ENCODE measurements at regions of chr7 and their contacts with region 1.

Region 1: GRCh38 chr7:141737834-141738591 is at the start of gene SSBP1:
- DNase-seq: peak; percentile 95
- H3K4me3 Mint-ChIP-seq: peak within 1 kb of the TSS; percentile 90
- H3K27ac Mint-ChIP-seq: peak within 1 kb of the TSS; percentile 96
- H3K4me1 Mint-ChIP-seq: peaks cover 36% of the 10 kb centered on the region
- H3K27me3 Mint-ChIP-seq: no peaks in the 10 kb centered on the region
- total RNA-seq, gene SSBP1: 202 to 230 TPM

Region 2: DNA sequence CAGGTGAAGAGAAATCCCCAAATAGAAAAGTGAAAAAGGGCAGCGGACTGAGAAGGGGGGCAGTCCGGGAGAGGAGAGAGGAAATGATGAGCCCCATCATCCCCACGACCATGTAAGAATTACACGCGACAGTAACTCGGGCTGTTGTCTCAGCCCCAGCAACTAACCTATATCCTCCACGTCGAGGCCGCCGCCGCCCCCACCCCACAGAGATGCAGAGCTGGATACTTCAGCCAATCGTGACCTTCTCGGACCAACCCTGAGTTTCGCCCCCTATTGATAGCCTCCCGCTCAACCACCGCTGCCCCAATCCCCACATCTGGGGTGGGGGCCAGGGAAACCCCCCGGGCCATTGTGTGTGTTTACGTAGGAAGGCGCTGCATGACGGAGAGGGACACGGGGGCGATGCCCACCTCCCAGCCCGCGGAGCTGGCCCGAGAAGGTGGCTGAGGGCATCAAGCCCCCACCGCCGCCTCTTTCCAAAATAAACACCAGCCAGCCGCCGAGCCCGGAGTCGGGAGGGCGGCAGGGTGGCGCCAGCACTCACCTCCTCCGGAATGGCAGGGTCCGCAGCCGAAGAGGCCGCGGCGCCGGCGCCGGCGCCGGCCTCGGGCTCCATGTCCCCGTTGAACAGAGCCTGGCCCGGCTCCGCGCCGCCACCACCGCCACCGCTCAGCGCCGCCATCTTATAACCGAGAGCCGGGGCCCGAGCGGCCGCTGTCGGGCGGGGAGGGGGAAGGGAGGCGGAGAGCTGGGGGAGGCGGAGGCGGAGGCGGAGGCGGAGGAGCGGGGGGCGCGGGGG is 813.8 kb before region 1 on chr7:
- CTCF ChIA-PET with region 1: no interaction called
- intact Hi-C with region 1: loop called (anchors 1 kb)
- DNase-seq: peak; percentile 77
- H3K4me3 Mint-ChIP-seq: no peak overlapping the region
- H3K27ac Mint-ChIP-seq: no peak overlapping the region
- H3K4me1 Mint-ChIP-seq: peaks cover 10% of the 10 kb centered on the region
- H3K27me3 Mint-ChIP-seq: no peaks in the 10 kb centered on the region

Region 3: GRCh38 chr7:141558544-141559183 is 179.3 kb before region 1 on chr7:
- CTCF ChIA-PET with region 1: interaction called, 4 read pairs
- intact Hi-C with region 1: loop called (anchors 1 kb)
- DNase-seq: peak; percentile 29
- H3K4me3 Mint-ChIP-seq: no peak overlapping the region
- H3K27ac Mint-ChIP-seq: peak overlapping the region; percentile 26
- H3K4me1 Mint-ChIP-seq: peaks cover 65% of the 10 kb centered on the region
- H3K27me3 Mint-ChIP-seq: no peaks in the 10 kb centered on the region

Region 4: GRCh38 chr7:141674702-141675101 is 63.3 kb before region 1 on chr7:
- CTCF ChIA-PET with region 1: interaction called, 4 read pairs
- intact Hi-C with region 1: loop called (anchors 1 kb)
- DNase-seq: peak; percentile 15
- H3K4me3 Mint-ChIP-seq: no peak overlapping the region
- H3K27ac Mint-ChIP-seq: no peak overlapping the region
- H3K4me1 Mint-ChIP-seq: peaks cover 17% of the 10 kb centered on the region
- H3K27me3 Mint-ChIP-seq: no peaks in the 10 kb centered on the region

Region 5: GRCh38 chr7:141722529-141722928 is 15.5 kb before region 1 on chr7:
- CTCF ChIA-PET with region 1: interaction called, 11 read pairs
- intact Hi-C with region 1: no loop called
- DNase-seq: no peak
- H3K4me3 Mint-ChIP-seq: no peak overlapping the region
- H3K27ac Mint-ChIP-seq: no peak overlapping the region
- H3K4me1 Mint-ChIP-seq: no peaks in the 10 kb centered on the region
- H3K27me3 Mint-ChIP-seq: no peaks in the 10 kb centered on the region

Region 6: DNA sequence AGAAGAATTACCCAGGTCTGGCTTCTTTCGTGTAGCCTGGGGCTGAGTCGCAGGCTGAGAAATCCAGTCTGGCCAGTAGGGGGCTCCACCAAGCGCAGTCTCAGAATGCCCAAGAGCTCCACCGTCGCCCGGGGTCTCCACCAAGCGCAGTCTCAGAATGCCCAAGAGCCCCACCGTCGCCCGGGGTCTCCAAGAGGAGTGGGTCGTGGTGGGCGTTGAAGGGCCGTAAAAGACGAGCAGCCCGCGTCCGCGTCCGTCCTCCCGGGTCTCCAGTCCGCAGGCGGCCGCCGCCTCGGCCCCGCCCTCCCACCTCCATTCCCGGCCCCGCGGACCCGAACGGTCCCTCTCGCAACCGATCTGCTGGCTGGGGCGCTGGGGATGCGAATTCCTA is 1642.2 kb after region 1 on chr7:
- CTCF ChIA-PET with region 1: no interaction called
- intact Hi-C with region 1: loop called (anchors 2 kb)
- DNase-seq: peak; percentile 93
- H3K4me3 Mint-ChIP-seq: peak overlapping the region; percentile 82
- H3K27ac Mint-ChIP-seq: peak overlapping the region; percentile 92
- H3K4me1 Mint-ChIP-seq: peaks cover 35% of the 10 kb centered on the region
- H3K27me3 Mint-ChIP-seq: no peaks in the 10 kb centered on the region